ENCODE measurements at regions of chr6 and their contacts with region 1.

Region 1: DNA sequence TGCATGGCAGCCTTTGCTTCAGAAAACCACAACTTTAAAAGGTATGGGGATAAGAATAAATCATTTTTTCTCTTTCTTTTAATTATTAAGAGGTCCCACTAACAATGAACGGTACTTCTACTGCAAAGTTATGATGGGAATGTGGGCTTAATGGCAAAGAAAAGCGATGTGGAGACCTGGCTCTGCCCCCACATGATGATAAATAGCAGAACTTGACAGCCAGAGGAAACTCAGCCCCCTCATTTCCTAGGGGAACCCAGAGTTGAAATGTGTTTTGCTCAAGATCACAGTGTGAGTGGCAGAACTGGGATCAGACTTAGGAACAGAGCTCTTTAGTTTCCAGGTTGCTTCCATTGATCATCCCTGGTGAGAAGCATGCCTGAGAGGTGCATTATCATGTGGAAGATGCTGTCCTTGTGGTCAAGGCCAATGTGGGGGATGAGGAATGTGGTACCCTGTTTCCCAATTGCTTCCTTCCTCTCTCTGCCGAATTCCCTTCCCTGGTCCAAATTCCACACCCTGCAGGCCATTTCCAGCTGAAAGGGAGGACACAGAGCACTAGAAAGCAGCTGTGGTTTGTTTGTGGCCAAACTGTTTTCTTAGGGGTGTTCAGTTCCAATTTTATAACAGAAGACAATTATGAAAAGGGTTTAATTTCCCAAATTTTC is 66.0 kb downstream of the BACH2 start:
- DNase-seq: no peak
- ATAC-seq: no peak
- H3K4me3 ChIP-seq: no peak overlapping the region
- H3K27ac ChIP-seq: no peak overlapping the region
- H3K4me1 ChIP-seq: no peaks in the 10 kb centered on the region
- H3K27me3 ChIP-seq: no peaks in the 10 kb centered on the region
- CTCF ChIP-seq: no peak

Region 2: DNA sequence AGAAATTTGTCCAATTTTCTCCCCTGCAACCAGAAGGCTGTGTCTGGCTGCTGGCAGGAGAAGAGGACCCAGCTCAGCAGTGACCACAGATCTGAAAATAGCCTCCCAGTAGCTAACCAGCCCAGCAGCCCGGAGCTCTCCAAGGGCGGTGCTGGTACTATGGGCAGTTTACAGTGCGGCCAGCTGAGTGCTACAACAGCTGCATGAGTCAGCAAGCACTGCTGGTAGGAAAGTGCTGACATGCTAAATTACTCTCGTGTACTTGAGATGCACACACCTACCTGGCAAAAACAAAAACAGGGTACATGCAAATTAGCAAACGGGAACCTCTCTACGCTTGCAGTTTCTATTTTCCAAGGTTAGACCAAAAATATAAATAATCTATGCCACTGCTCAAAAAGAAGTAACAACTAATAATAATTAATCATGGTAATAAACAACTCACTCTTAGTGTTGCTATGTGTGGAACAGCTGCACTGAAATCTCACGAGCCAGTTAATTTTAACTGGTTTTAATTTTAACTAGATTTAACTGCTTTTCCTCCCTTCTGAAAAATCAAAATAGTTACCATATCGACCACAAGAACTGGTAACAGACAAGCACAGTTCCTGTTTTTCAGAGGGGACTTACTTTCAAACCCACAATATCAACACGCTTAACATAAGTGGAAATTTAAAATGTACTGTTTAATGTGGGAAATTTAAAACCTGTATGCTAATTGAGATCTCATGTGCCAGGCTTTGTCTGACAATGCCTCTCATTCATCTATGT is 55.1 kb after region 1 on chr6:
- intact Hi-C with region 1: loop called in 1 of 2 experiments (anchors 10 kb)
- DNase-seq: peak; percentile 44 to 88 (median 81)
- ATAC-seq: peak; percentile 97
- H3K4me3 ChIP-seq: no peak overlapping the region
- H3K27ac ChIP-seq: peak overlapping the region; percentile 34 to 81
- H3K4me1 ChIP-seq: peaks cover 10 to 30% of the 10 kb centered on the region in 2 donors
- H3K27me3 ChIP-seq: peaks cover 0 to 23% of the 10 kb centered on the region in 2 donors
- CTCF ChIP-seq: no peak

Region 3: DNA sequence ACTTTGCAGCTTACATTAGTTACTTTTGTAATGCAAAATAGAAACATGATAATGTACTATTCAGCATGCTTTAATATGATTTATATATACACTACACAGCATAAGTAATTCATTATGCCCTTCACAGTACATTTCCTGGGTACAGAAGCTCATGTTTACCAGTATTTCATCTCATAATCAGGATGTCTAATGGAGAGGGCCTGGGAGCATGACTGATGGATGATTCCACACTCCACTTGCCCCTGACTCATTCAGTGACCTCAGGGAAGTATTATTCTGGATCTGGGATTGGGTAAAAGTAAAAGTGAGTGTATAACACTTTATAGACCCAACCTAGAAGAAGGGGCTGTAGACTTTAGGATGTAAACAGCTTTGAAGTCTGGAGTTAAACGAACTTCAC is 97.3 kb after region 1 on chr6:
- intact Hi-C with region 1: no loop called
- DNase-seq: no peak
- ATAC-seq: no peak
- H3K4me3 ChIP-seq: no peak overlapping the region
- H3K27ac ChIP-seq: no peak overlapping the region
- H3K4me1 ChIP-seq: no peaks in the 10 kb centered on the region
- H3K27me3 ChIP-seq: no peaks in the 10 kb centered on the region
- CTCF ChIP-seq: no peak

Region 4: GRCh38 chr6:90574610-90575009 is 343.9 kb after region 1 on chr6:
- intact Hi-C with region 1: no loop called
- DNase-seq: no peak
- ATAC-seq: no peak
- H3K4me3 ChIP-seq: no peak overlapping the region
- H3K27ac ChIP-seq: no peak overlapping the region
- H3K4me1 ChIP-seq: no peaks in the 10 kb centered on the region
- H3K27me3 ChIP-seq: no peaks in the 10 kb centered on the region
- CTCF ChIP-seq: no peak